ENCODE measurements at regions of chr10 and their contacts with region 1.

Region 1: DNA sequence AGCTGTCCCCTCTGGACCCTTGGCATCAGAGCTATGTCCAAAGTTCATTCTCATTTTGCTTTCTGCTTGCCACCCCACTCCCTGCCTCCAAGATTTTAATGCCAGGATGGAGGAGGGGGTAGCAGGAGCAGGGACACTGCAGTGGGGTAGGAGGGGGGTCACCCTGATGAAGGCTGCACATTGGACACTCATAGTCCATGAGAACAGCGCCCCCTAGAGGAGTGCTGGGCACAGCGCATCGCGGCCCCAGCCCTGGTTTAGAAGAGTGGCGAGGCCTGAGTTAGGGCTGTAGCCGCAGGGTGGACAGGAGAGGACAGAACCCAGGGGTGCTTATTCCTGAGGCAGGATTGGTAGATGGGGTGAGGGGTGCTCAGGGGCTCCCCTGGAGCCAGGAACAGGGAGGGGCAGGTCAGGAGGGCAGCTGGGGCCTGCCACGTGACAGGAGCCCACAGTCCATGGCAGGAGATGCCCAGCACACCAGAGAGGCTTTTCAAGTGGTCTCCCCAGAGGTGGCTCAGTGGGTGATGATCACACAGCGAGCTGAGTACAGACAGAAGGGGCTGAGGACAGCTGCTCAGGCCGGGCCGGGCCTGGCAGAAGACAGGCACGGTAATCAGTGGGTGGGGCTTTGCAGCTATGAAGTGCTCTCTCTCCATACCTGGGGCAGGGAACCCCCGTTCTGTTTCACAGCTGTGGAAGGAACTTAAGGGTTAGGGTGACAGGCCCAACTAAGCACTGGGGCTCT is 71.4 kb downstream of the NEURL1 start:
- DNase-seq: peak in 1 of 2 experiments; percentile 95
- H3K4me3 ChIP-seq: no peak overlapping the region
- H3K27ac ChIP-seq: no peak overlapping the region
- H3K4me1 ChIP-seq: no peaks in the 10 kb centered on the region; a peak in 1 of 7 replicates
- H3K27me3 ChIP-seq: no peaks in the 10 kb centered on the region
- CTCF ChIP-seq: peak; percentile 77 to 98 (median 94)
- EP300 ChIP-seq: no peak
- POLR2A ChIP-seq: no peak
- RAD21 ChIP-seq: peak; percentile 76 to 85

Region 2: DNA sequence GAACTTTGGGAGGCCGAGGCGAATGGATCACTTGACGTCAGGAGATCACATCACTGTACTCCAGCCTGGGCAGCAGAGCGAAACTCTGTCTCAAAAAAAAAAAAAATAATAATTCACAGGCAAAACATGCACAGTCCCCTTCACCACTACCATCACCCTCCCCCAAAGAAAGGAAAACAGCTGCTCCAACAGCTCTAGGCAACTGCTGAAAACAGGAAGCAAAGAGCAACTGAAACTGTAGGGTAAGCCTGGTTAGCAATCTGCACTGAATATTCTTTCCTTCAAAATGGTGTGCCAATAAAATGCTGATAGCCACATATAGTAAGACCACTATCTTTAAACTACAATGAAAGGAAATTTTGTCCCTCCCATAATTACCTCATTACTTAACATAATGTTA is 383.7 kb before region 1 on chr10:
- CTCF ChIA-PET with region 1: no interaction called
- POLR2A ChIA-PET with region 1: no interaction called
- DNase-seq: peak in 1 of 2 experiments; percentile 24
- H3K4me3 ChIP-seq: no peak overlapping the region
- H3K27ac ChIP-seq: no peak overlapping the region
- H3K4me1 ChIP-seq: peaks cover 0 to 5% (median 1%) of the 10 kb centered on the region in 4 experiments; a peak in 1 of 7 replicates
- H3K27me3 ChIP-seq: no peaks in the 10 kb centered on the region
- CTCF ChIP-seq: no peak
- EP300 ChIP-seq: no peak
- POLR2A ChIP-seq: no peak
- RAD21 ChIP-seq: no peak

Region 3: DNA sequence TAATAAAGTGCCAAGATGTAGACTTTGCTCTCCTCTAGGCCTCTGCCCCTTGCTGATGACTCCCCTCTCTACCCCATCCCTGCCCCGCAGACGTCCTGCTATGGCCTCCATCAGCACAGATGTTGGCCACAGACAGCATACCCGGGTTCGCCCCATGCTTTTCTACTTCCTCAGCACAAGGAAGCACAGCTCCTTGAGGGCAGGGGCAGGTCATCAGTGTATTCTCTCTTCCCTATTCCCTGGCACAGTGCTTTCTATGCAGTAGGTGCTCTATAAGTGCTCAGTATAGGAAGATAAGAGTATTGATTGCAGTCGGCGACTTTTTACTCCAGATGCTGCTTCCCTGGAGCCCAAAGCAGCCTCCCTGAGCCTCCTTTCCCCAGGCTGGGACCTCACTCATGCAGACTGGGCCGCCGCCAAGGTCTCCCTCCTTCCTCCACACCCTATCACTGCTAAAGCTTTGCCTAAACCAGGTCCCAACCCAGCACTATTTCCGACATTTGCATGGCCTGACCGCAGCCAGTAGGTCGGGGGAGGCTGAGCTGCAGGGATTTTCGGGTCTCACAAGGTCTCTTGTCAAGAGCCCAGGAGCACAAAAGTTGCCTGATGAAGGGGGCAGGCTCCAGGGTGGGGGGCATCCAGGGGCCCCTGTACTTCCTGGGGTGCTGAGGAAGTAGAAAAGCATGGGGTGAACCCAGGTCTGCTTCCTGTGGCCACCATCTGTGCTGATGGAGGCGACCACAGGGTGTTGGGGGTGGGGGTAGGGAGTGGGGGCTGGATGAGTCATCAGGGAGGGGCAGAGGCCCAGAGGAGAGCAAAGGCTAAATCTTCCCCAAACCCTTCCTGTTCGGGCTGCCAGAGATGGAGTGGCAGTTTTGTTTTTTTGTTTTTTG is 93.9 kb before region 1 on chr10:
- CTCF ChIA-PET with region 1: interaction called, 34 read pairs
- POLR2A ChIA-PET with region 1: no interaction called
- DNase-seq: no peak
- H3K4me3 ChIP-seq: no peak overlapping the region
- H3K27ac ChIP-seq: no peak overlapping the region
- H3K4me1 ChIP-seq: peaks cover 0 to 11% (median 2%) of the 10 kb centered on the region in 4 experiments; a peak in 2 of 7 replicates
- H3K27me3 ChIP-seq: no peaks in the 10 kb centered on the region
- CTCF ChIP-seq: no peak
- EP300 ChIP-seq: no peak
- POLR2A ChIP-seq: no peak
- RAD21 ChIP-seq: no peak

Region 4: DNA sequence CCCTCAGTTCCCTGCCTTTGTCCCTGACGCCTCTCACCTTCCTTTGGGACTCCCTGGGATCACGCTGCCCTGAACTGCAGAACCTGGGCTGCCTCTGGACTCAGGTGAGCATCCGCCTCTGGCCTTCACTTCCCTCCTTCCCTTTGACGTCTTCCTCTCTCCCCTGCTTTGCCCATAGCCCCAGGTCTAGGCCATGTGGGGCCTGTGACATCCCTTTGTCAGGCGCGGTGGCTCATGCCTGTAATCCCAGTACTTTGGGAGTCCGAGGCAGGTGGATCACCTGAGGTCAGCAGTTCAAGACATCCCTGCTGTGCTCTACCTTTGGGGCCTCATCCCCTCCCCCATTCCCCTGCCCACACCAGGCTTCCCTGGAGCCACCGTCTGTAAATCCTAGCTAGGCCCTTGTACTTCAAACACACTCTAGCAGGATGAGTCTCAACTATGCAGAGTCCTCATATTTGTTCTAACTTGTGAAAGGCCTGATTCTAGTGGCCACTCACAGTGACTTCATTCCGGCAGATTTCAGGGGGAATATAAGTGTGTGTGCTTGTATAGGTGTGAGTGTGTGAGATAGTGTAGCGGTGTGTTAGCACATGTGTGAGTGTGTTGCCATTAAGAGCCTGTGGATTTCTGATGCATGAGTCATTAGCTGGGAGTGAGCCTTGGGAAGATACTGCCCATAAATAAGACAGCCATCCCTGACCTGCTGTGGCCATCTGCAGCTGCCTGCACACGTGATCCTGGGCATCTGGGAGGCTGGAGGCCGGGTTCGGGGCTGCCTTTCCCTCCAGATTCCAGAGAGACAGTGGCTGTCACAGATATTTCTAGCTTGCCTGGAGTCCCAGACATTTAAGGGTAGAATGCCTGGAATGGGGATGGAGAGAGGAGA is 73.2 kb before region 1 on chr10:
- CTCF ChIA-PET with region 1: interaction called, 24 read pairs
- POLR2A ChIA-PET with region 1: no interaction called
- DNase-seq: no peak
- H3K4me3 ChIP-seq: no peak overlapping the region
- H3K27ac ChIP-seq: no peak overlapping the region
- H3K4me1 ChIP-seq: peaks cover 0 to 4% (median 3%) of the 10 kb centered on the region in 4 experiments; a peak in 5 of 7 replicates
- H3K27me3 ChIP-seq: peaks cover 8 to 36% (median 28%) of the 10 kb centered on the region in 4 experiments
- CTCF ChIP-seq: no peak
- EP300 ChIP-seq: no peak
- POLR2A ChIP-seq: no peak
- RAD21 ChIP-seq: no peak

Region 5: DNA sequence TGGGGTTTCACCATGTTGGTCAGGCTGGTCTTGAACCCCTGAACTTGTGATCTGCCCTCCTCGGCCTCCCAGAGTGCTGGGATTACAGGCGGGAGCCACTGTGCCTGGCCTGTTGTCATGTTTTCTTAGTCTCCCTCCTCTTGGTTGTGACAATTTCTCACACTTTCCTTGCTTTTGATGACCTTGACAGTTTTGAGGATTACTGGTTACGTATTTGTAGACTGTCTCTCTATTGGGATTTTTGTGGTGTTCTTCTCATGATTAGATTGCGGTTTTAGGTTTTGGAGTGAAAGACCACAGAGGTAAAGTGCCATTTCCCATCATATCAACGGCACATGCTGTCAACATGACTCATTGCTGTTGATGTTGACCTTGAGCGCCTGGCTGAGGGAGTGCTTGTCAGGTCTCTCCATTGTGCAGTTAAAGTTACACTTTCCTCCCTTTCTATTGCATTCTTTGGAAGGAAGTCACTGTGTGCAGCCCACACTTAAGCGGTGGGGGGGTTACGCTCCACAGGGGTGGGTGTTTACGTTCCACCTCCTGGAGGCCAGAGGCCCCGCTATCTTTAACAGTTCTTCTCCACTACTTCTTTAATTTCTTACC is 60.7 kb before region 1 on chr10:
- CTCF ChIA-PET with region 1: interaction called, 37 read pairs
- POLR2A ChIA-PET with region 1: no interaction called
- DNase-seq: no peak
- H3K4me3 ChIP-seq: no peak overlapping the region
- H3K27ac ChIP-seq: no peak overlapping the region
- H3K4me1 ChIP-seq: no peaks in the 10 kb centered on the region; a peak in 2 of 7 replicates
- H3K27me3 ChIP-seq: no peaks in the 10 kb centered on the region
- CTCF ChIP-seq: no peak
- EP300 ChIP-seq: no peak
- POLR2A ChIP-seq: no peak
- RAD21 ChIP-seq: no peak

Region 6: DNA sequence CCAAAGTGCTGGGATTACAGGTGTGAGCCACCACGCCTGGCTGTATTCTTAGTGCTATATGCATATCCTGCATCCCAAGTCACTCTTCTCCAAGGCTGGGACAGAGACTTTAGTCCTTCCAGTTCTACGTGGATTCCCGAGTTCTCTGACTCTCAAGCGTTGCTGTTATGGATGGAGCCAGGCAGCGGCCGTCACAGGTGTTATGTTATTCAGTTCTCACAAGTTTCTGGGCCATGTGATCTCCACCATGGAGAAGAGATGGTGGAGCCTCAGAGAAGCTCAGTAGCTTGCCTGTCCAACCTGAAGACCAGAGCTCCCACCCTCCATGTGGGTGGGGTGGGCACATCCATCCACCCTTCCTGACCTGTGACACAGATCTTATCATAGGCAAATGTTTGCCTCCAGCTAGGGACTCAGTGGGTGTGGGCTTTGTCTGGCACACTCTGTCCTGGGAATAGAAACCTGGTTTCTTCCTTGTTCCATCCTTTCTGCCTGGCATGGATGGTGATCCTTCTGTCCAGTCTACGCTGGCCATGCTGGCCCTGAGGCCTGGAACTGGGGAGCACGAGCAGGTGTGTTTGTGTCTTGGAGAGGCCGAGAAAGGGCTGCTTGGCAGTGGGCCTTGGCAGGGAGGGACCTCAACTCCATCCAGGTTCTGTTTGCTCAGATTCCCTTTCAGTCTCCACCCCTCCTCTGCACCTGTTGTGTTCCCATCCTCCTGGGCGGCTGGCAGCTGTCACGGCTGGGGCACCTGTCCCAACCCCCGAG is 16.2 kb before region 1 on chr10:
- CTCF ChIA-PET with region 1: interaction called, 64 read pairs
- POLR2A ChIA-PET with region 1: interaction called, 3 read pairs
- DNase-seq: no peak
- H3K4me3 ChIP-seq: no peak overlapping the region
- H3K27ac ChIP-seq: no peak overlapping the region
- H3K4me1 ChIP-seq: peaks cover 0 to 3% (median 0%) of the 10 kb centered on the region in 4 experiments; a peak in 1 of 7 replicates
- H3K27me3 ChIP-seq: peaks cover 0 to 2% (median 0%) of the 10 kb centered on the region in 4 experiments; a peak in 1 of 7 replicates
- CTCF ChIP-seq: no peak
- EP300 ChIP-seq: no peak
- POLR2A ChIP-seq: no peak
- RAD21 ChIP-seq: no peak

Region 7: GRCh38 chr10:103578782-103579382 is 13.9 kb after region 1 on chr10:
- CTCF ChIA-PET with region 1: interaction called, 134 read pairs
- POLR2A ChIA-PET with region 1: no interaction called
- DNase-seq: no peak
- H3K4me3 ChIP-seq: no peak overlapping the region
- H3K27ac ChIP-seq: no peak overlapping the region
- H3K4me1 ChIP-seq: no peaks in the 10 kb centered on the region; a peak in 1 of 7 replicates
- H3K27me3 ChIP-seq: no peaks in the 10 kb centered on the region; a peak in 1 of 7 replicates
- CTCF ChIP-seq: no peak
- EP300 ChIP-seq: no peak
- POLR2A ChIP-seq: no peak
- RAD21 ChIP-seq: no peak

Region 8: GRCh38 chr10:103685880-103686669 is 121.1 kb after region 1 on chr10:
- CTCF ChIA-PET with region 1: interaction called, 14 read pairs
- POLR2A ChIA-PET with region 1: no interaction called
- DNase-seq: peak; percentile 50 to 97
- H3K4me3 ChIP-seq: no peak overlapping the region
- H3K27ac ChIP-seq: no peak overlapping the region
- H3K4me1 ChIP-seq: peaks cover 0 to 10% (median 4%) of the 10 kb centered on the region in 4 experiments; a peak in 3 of 7 replicates
- H3K27me3 ChIP-seq: peaks cover 0 to 4% (median 0%) of the 10 kb centered on the region in 4 experiments; a peak in 1 of 7 replicates
- CTCF ChIP-seq: peak; percentile 96 to 98 (median 97)
- EP300 ChIP-seq: no peak
- POLR2A ChIP-seq: no peak
- RAD21 ChIP-seq: peak; percentile 92 to 98

Region 9: GRCh38 chr10:103759100-103759781 is 194.3 kb after region 1 on chr10:
- CTCF ChIA-PET with region 1: no interaction called
- POLR2A ChIA-PET with region 1: no interaction called
- DNase-seq: no peak
- H3K4me3 ChIP-seq: no peak overlapping the region
- H3K27ac ChIP-seq: no peak overlapping the region
- H3K4me1 ChIP-seq: peaks cover 8 to 16% (median 12%) of the 10 kb centered on the region in 4 experiments
- H3K27me3 ChIP-seq: no peaks in the 10 kb centered on the region
- CTCF ChIP-seq: no peak
- EP300 ChIP-seq: no peak
- POLR2A ChIP-seq: no peak
- RAD21 ChIP-seq: no peak

Region 10: GRCh38 chr10:103888113-103888841 is 323.3 kb after region 1 on chr10:
- CTCF ChIA-PET with region 1: no interaction called
- POLR2A ChIA-PET with region 1: no interaction called
- DNase-seq: no peak
- H3K4me3 ChIP-seq: no peak overlapping the region
- H3K27ac ChIP-seq: no peak overlapping the region
- H3K4me1 ChIP-seq: peaks cover 0 to 2% (median 0%) of the 10 kb centered on the region in 4 experiments; a peak in 1 of 7 replicates
- H3K27me3 ChIP-seq: no peaks in the 10 kb centered on the region
- CTCF ChIP-seq: peak in 2 of 3 experiments; percentile 49 to 85; a peak in 2 of 4 replicates
- EP300 ChIP-seq: no peak
- POLR2A ChIP-seq: no peak
- RAD21 ChIP-seq: peak; percentile 88 to 89

Measured in H1 (cell line).